Posterior cingulate gyrus (tissue), 11 donors: ENCODE measurements at regions of chr18 and their contacts with region 1.

Region 1: DNA sequence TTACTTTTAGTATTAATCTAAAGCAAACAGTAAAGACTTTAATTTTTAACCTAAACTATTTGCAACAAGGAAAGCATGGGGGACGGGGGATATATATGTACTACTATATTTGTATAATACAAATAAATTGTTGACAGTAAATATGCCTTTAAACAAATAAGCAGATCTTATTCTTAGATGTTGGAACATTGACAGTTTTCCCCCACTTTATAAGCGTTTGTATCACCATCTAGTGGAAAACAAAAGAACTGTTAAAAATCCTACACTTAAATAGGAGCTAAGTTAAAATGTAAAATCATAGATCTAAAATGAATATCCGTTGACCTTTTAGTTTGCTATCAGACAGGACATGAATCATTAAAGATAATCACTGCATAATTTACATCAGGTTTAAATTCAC is 50.0 kb downstream of the RBBP8 start:
- DNase-seq: no peak

Region 2: GRCh38 chr18:22800551-22800951 is 182.6 kb before region 1 on chr18:
- intact Hi-C with region 1: loop called (anchors 2 kb)
- DNase-seq: no peak

Region 3: DNA sequence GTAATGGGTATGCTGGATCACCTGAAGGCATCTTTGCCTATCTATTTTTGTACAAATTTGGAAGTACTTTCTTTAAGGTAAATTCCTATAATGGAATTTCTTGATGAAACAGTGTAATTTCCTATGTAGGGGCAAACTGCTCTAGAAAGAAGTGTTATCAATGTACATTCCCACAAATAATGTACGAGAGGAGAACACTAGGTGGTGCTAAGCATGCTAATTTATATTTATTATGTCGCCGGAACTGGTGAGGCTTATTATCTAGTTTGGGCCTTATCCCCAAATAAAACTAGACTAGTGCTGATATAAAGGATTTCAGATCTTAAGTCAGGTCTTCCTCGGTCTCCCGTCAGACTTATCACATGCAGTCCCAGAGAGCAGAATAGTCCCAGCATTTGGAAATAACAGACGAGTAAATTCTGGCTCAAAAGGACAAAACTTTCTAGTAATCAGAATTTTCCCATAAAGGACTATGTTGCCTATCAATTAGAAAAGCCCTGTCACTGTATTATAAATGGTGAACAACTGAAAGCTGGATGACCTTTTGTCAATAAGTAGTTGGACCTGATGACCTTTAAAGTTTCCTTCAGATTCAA is 137.0 kb before region 1 on chr18:
- intact Hi-C with region 1: loop called (anchors 5 kb)
- DNase-seq: no peak

Region 4: GRCh38 chr18:22933206-22933957 is 49.8 kb before region 1 on chr18 and contains the start of gene RBBP8:
- intact Hi-C with region 1: loop called (anchors 5 kb)
- DNase-seq: peak; percentile 66 to 97 (median 82)